Activated CD4-positive, alpha-beta T cell treated with anti-CD3 and anti-CD28 coated beads, Interleukin-2, amount 10 ng/mL, durations not matched to agents 24 days and 14 days (primary cell): ENCODE measurements at regions of chr11 and their contacts with region 1.

Region 1: GRCh38 chr11:18775492-18776292 is 15.9 kb downstream of the PTPN5 start:
- DNase-seq: peak; percentile 90
- H3K4me3 Mint-ChIP-seq: no peak overlapping the region
- H3K27ac Mint-ChIP-seq: no peak overlapping the region
- H3K4me1 Mint-ChIP-seq: peaks cover 14% of the 10 kb centered on the region
- H3K27me3 Mint-ChIP-seq: peaks cover 7% of the 10 kb centered on the region

Region 2: DNA sequence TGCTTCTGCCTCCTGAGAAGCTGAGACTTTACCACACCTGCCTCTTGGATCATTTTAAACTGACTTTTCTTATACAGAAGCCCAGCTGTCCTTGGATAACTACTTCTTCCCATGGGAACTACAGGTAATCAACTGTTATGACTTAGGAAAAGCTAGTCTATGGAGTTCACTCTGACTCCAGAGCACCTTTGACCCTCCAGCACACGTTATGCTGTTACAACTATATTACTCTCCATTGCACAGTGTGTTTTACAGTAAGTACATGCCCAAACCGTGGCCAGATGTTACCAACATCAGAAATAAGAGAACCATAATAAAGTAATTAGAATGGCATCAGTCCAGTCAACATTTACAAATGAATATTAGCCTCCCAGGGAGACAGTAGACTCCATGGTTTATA is 227.7 kb before region 1 on chr11:
- intact Hi-C with region 1: no loop called
- DNase-seq: no peak
- H3K4me3 Mint-ChIP-seq: no peak overlapping the region
- H3K27ac Mint-ChIP-seq: no peak overlapping the region
- H3K4me1 Mint-ChIP-seq: no peaks in the 10 kb centered on the region
- H3K27me3 Mint-ChIP-seq: no peaks in the 10 kb centered on the region

Region 3: GRCh38 chr11:18802381-18803257 is 26.9 kb after region 1 on chr11:
- intact Hi-C with region 1: loop called (anchors 1 kb)
- DNase-seq: peak; percentile 78
- H3K4me3 Mint-ChIP-seq: no peak overlapping the region
- H3K27ac Mint-ChIP-seq: no peak overlapping the region
- H3K4me1 Mint-ChIP-seq: no peaks in the 10 kb centered on the region
- H3K27me3 Mint-ChIP-seq: peaks cover 40% of the 10 kb centered on the region

Region 4: GRCh38 chr11:18853086-18853720 is 77.5 kb after region 1 on chr11:
- intact Hi-C with region 1: loop called (anchors 1 kb)
- DNase-seq: no peak
- H3K4me3 Mint-ChIP-seq: no peak overlapping the region
- H3K27ac Mint-ChIP-seq: no peak overlapping the region
- H3K4me1 Mint-ChIP-seq: no peaks in the 10 kb centered on the region
- H3K27me3 Mint-ChIP-seq: peaks cover 22% of the 10 kb centered on the region

Region 5: GRCh38 chr11:19040051-19040450 is 264.4 kb after region 1 on chr11:
- intact Hi-C with region 1: no loop called
- DNase-seq: no peak
- H3K4me3 Mint-ChIP-seq: no peak overlapping the region
- H3K27ac Mint-ChIP-seq: no peak overlapping the region
- H3K4me1 Mint-ChIP-seq: no peaks in the 10 kb centered on the region
- H3K27me3 Mint-ChIP-seq: peaks cover 24% of the 10 kb centered on the region